ENCODE measurements at regions of chr14 and their contacts with region 1.

Region 1: GRCh38 chr14:55354500-55354899 is 57.1 kb downstream of the ATG14 start:
- DNase-seq: peak; percentile 68
- H3K4me3 ChIP-seq: no peak overlapping the region
- H3K27ac ChIP-seq: no peak overlapping the region
- H3K4me1 ChIP-seq: peaks cover 4% of the 10 kb centered on the region
- H3K27me3 ChIP-seq: no peaks in the 10 kb centered on the region
- CTCF ChIP-seq: peak; percentile 76

Region 2: GRCh38 chr14:55212634-55213033 is 141.9 kb before region 1 on chr14:
- CTCF ChIA-PET with region 1: interaction called, 8 read pairs
- POLR2A ChIA-PET with region 1: no interaction called
- intact Hi-C with region 1: loop called (anchors 1 kb)
- DNase-seq: peak; percentile 91
- H3K4me3 ChIP-seq: peak overlapping the region; percentile 16
- H3K27ac ChIP-seq: peak overlapping the region; percentile 62
- H3K4me1 ChIP-seq: no peaks in the 10 kb centered on the region
- H3K27me3 ChIP-seq: no peaks in the 10 kb centered on the region
- CTCF ChIP-seq: no peak

Region 3: DNA sequence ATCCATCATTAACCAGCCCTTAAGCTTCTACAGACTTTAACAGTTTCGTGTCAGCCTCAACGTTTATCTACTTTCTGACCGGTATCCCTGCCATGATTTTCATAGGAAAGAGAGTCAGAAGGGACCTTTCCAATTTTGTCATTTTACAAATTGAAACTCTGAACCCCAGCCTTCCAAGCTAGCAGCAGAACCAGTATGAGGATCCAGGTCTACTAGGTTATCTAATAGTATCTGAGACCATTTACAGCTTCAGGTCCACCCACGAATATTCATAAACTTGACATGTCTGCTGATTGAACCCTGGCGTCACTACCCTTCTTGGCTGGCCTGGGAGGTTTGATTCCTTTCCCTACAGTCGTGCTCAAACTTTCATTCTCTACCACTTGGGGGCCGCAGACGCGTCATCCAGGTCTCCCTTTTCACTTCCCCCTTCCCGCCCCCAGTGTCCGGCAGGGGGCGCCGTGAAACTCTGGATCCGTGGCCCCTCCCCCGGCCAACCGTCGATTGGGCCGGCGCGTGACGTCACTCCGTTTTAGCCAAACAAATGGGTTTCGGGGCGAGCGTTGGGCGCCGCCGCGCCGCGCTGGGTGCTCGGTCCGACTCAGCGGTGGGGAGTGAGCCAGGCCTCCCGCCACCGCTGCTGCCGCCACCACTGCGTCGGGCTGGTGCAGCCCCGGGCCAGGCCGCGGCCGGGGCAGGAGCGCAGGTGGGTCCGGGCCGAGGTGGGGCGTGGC is 83.5 kb before region 1 on chr14 and contains the start of gene FBXO34:
- CTCF ChIA-PET with region 1: interaction called, 5 read pairs
- POLR2A ChIA-PET with region 1: interaction called, 4 read pairs
- intact Hi-C with region 1: loop called (anchors 1 kb)
- DNase-seq: peak; percentile 99
- H3K4me3 ChIP-seq: peak within 1 kb of the TSS; percentile 94
- H3K27ac ChIP-seq: peak within 1 kb of the TSS; percentile 89
- H3K4me1 ChIP-seq: peaks cover 24% of the 10 kb centered on the region
- H3K27me3 ChIP-seq: no peaks in the 10 kb centered on the region
- CTCF ChIP-seq: peak; percentile 100
- total RNA-seq, gene FBXO34: 20.9 and 21.4 TPM in 2 replicates

Measured in A673 (cell line).